ENCODE measurements at regions of chr5 and their contacts with region 1.

Region 1: DNA sequence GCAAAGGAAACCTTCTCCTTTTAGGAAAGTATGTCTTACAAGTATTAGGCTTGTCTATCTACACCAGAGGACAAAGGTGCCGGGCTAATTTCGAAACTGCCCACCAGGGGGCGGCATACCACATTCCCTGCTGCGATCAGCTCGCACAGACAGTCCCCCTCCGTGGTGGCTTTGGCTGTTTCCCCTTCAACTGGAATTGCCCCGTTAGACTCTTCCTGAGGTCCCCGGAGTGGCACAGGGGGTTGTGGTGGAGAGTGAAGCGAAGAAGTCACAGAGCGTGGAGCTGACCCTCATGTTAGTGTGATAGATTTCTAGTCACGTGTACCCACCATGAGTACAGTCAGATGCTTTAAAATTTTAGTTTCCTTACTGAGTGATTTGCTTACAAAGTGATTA is 17.5 kb downstream of the PTTG1 start:
- DNase-seq: peak; percentile 44
- H3K4me3 ChIP-seq: peak overlapping the region; percentile 60
- H3K27ac ChIP-seq: no peak overlapping the region
- H3K27me3 ChIP-seq: peaks cover 7% of the 10 kb centered on the region
- CTCF ChIP-seq: peak; percentile 95

Region 2: DNA sequence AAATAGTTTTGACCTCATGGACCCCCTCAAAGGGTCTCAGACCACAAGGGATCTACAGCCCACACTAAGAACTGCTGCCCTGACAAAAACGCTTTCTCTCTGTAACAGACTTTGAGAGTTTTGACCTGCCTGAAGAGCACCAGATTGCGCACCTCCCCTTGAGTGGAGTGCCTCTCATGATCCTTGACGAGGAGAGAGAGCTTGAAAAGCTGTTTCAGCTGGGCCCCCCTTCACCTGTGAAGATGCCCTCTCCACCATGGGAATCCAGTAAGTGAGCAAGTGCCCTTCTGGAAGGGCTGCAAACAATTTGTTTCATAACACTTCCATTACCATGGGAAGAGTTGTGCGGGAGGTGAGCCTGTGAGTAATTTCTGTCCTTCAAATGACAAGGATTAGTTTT is 11.6 kb before region 1 on chr5:
- CTCF ChIA-PET with region 1: interaction called, 113 read pairs
- POLR2A ChIA-PET with region 1: interaction called, 3 read pairs
- DNase-seq: no peak
- H3K4me3 ChIP-seq: no peak overlapping the region
- H3K27ac ChIP-seq: no peak overlapping the region
- H3K27me3 ChIP-seq: no peaks in the 10 kb centered on the region
- CTCF ChIP-seq: no peak

Region 3: DNA sequence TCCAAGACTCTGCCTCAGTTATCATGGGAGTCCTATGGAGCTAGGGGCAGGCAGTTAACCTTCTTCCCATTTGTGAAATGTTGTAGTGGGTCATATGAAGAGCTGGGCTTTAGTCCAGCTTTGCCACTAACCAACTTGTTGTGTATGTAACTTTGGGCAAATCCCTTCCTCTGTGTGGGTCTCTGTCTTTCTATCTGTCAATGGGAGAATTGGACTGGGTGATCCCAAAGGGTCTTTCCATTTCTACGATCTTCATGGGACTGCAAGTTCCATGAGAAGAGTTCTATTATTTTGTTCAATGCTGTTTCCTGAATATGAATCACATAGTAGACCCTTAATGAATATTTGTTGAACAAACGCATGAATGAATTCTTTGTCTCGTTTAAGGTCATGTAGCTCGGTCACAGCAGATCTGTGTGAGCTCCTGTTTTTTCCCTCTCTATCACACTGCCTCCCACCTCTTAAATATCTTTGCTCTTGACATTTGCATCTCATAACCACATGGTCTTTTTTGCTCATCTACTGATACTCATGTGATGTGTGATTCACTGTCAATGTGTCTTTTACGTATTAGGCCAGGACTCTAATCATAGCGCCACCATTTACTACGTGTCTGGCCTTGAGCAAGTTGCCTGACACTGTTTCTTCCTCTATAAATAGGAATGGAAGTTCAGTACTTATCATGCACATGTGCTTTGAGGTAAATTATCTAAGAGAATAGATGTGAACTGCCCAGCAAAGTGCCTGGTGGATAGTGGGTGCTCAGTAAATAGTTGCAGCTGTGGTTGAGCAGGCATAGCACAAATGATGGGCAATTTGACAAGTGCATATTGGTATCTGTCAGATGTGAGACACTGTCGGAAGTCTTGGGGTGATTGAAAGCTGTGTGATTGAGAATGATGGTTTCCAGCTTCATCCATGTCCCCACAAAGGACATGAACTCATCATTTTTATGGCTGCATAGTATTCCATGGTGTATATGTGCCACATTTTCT is 19.9 kb after region 1 on chr5:
- CTCF ChIA-PET with region 1: interaction called, 52 read pairs
- POLR2A ChIA-PET with region 1: no interaction called
- DNase-seq: no peak
- H3K4me3 ChIP-seq: no peak overlapping the region
- H3K27ac ChIP-seq: no peak overlapping the region
- H3K27me3 ChIP-seq: no peaks in the 10 kb centered on the region
- CTCF ChIP-seq: no peak

Region 4: DNA sequence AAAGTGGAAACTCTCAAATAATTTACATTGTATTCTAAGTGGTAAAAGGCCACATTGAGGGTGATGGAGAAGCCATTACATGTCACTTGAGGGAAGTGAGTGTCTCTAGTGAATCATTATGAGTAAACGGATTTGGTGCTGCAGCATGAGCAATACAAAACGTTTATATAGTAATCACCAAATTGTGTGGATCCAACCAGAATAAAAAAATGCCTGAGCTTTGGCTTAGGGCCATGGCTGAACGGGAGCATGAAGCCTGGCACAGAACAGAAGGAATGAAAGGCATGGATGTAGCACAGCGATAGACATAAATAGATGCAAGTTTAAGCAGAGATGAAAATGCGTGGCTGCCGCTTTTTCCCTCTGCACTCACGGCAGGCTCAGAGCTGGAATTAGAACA is 40.7 kb after region 1 on chr5:
- CTCF ChIA-PET with region 1: interaction called, 28 read pairs
- POLR2A ChIA-PET with region 1: no interaction called
- DNase-seq: peak; percentile 45
- H3K4me3 ChIP-seq: no peak overlapping the region
- H3K27ac ChIP-seq: no peak overlapping the region
- H3K27me3 ChIP-seq: no peaks in the 10 kb centered on the region
- CTCF ChIP-seq: no peak

Region 5: GRCh38 chr5:160492565-160492964 is 53.4 kb after region 1 on chr5:
- CTCF ChIA-PET with region 1: interaction called, 11 read pairs
- POLR2A ChIA-PET with region 1: no interaction called
- DNase-seq: no peak
- H3K4me3 ChIP-seq: no peak overlapping the region
- H3K27ac ChIP-seq: no peak overlapping the region
- H3K27me3 ChIP-seq: peaks cover 2% of the 10 kb centered on the region
- CTCF ChIP-seq: no peak

Region 6: GRCh38 chr5:160508780-160509361 is 69.7 kb after region 1 on chr5:
- CTCF ChIA-PET with region 1: interaction called, 78 read pairs
- POLR2A ChIA-PET with region 1: no interaction called
- DNase-seq: peak; percentile 65
- H3K4me3 ChIP-seq: no peak overlapping the region
- H3K27ac ChIP-seq: no peak overlapping the region
- H3K27me3 ChIP-seq: peaks cover 4% of the 10 kb centered on the region
- CTCF ChIP-seq: peak; percentile 87

Region 7: GRCh38 chr5:160555961-160556631 is 116.9 kb after region 1 on chr5:
- CTCF ChIA-PET with region 1: no interaction called
- POLR2A ChIA-PET with region 1: no interaction called
- DNase-seq: no peak
- H3K4me3 ChIP-seq: no peak overlapping the region
- H3K27ac ChIP-seq: no peak overlapping the region
- H3K27me3 ChIP-seq: peaks cover 3% of the 10 kb centered on the region
- CTCF ChIP-seq: no peak